Posterior cingulate gyrus (tissue), 11 donors: ENCODE measurements at regions of chrX and their contacts with region 1.

Region 1: GRCh38 chrX:107710617-107711391 is 64.8 kb downstream of the TSC22D3 start:
- DNase-seq: no peak

Region 2: GRCh38 chrX:107676559-107677378 is 34.0 kb before region 1 on chrX:
- intact Hi-C with region 1: loop called (anchors 5 kb)
- DNase-seq: peak in 8 of 10 donors; percentile 22 to 91 (median 62)

Region 3: DNA sequence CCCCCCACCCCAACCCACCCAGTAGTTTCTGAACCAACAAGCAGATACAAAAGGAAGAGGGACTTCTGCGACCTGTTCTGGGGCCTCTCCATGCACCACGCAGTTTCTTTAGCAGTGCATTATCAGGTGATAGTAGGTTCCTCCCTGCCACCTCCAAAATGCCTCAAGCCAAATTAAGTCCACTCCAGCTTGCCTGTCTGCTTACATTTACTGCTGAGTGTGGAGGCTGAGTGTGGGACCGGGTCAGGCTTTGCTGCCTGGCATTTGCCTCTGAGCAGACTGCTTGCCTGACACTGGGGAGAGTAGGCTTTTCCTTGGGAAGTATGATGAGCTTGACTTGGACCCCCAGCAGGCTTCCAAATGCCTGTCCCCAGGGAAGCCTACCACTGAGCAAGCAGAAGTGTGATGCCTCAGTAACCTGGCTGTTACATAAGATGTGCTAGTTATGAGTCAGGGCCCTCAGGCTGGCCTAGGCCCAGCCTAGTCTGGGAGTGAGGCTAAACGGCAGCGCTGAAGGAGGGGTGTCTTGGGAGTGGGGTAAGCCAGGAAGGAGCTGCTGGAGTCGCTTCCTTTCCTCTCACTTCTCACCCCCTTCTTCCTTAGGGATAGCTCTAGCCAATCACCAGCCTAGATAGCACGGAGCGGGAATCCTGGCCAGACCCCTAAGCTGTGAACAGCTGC is 55.8 kb after region 1 on chrX:
- intact Hi-C with region 1: no loop called
- DNase-seq: no peak